Right cardiac atrium (tissue), 5 donors: ENCODE measurements at regions of chr2 and their contacts with region 1.

Region 1: GRCh38 chr2:215454519-215455246 is 18.8 kb upstream of the FN1 start:
- DNase-seq: no peak
- ATAC-seq: no peak
- H3K4me3 ChIP-seq: no peak overlapping the region
- H3K27ac ChIP-seq: no peak overlapping the region
- H3K4me1 ChIP-seq: no peaks in the 10 kb centered on the region
- H3K27me3 ChIP-seq: no peaks in the 10 kb centered on the region

Region 2: GRCh38 chr2:215573496-215573895 is 118.8 kb after region 1 on chr2:
- intact Hi-C with region 1: no loop called
- DNase-seq: no peak
- ATAC-seq: no peak
- H3K4me3 ChIP-seq: no peak overlapping the region
- H3K27ac ChIP-seq: no peak overlapping the region
- H3K4me1 ChIP-seq: no peaks in the 10 kb centered on the region
- H3K27me3 ChIP-seq: no peaks in the 10 kb centered on the region

Region 3: DNA sequence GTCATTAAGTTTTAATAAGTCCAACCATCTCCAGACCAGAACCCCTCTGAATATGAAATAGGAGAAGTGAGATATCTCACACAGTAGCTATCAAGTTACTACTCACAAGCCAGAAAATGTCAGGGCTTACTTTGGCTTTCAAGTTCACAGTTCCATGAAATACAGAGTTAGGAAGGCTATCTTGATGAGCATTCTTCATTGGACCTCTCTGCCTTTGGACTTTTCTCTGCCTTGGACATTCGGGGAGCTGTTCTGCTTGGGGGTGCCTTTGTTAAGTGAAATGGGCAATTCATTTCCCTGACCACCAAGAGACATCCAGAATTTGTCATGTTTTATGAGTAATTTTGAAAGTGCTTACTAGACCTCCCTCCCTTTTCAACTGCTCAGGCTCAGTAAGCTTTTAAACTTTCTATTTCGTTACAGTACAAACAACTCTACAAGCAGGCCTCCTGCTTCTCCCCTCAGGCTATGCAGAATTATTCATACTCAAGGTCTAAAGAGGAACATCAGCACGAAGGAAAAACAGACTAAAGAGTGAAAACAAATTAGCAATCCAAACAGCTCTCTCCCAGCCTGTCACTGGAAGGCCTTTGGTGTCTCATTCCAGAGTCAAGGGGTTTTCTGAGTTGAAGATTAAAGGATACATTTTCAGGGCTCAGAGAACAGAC is 463.4 kb after region 1 on chr2:
- intact Hi-C with region 1: loop called in 3 of 4 experiments (anchors 5 to 10 kb)
- DNase-seq: no peak
- ATAC-seq: no peak
- H3K4me3 ChIP-seq: no peak overlapping the region
- H3K27ac ChIP-seq: no peak overlapping the region
- H3K4me1 ChIP-seq: peaks cover 1% of the 10 kb centered on the region
- H3K27me3 ChIP-seq: no peaks in the 10 kb centered on the region